Calu3 (cell line): ENCODE measurements at regions of chr16 and their contacts with region 1.

Region 1: DNA sequence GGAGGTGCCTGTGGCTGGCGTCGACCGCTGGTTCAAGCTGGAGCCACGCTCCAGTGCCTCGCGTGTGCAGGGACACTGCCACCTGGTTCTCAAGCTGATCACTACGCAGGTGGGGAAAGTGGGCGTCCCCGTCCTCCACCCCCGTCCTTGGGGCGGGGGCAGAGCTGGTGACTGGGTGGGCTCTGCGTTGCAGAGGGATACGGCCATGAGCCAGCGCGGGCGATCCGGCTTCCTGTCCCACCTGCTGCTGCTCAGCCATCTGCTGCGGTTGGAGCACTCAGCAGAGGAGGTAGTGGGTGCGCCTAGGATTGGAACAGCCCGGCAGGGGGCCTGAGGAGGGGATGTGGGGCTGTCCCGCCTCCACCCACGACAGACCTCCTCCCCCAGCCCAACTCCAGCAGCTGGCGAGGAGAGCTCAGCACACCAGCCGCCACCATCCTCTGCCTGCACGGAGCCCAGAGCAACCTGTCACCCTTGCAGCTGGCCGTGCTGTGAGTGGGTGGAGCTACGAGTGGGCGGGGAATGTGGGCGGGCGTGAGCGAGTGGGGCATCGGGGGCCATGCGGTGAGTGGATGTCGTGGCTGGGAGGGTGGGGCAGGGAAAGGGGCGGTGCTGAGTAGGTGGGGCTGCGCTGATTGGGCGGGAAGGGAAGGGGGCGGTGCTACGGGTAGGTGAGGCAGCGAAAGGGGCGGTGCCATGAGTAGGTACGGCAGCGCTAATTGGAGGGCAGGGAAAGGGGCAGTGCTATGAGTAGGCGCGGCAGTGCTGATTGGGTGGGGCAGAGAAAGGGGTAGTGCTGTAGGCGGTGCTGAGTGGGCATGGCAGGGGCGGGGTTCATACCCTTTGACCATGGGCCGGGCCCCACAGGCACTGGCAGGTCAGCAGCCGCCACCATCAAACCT is 8.9 kb downstream of the TSR3 start:
- DNase-seq: peak; percentile 99
- H3K4me3 Mint-ChIP-seq: peak overlapping the region; percentile 95
- H3K27ac Mint-ChIP-seq: peak overlapping the region; percentile 89
- H3K4me1 Mint-ChIP-seq: peaks cover 13% of the 10 kb centered on the region
- H3K27me3 Mint-ChIP-seq: peaks cover 16% of the 10 kb centered on the region
- CTCF ChIP-seq: no peak

Region 2: DNA sequence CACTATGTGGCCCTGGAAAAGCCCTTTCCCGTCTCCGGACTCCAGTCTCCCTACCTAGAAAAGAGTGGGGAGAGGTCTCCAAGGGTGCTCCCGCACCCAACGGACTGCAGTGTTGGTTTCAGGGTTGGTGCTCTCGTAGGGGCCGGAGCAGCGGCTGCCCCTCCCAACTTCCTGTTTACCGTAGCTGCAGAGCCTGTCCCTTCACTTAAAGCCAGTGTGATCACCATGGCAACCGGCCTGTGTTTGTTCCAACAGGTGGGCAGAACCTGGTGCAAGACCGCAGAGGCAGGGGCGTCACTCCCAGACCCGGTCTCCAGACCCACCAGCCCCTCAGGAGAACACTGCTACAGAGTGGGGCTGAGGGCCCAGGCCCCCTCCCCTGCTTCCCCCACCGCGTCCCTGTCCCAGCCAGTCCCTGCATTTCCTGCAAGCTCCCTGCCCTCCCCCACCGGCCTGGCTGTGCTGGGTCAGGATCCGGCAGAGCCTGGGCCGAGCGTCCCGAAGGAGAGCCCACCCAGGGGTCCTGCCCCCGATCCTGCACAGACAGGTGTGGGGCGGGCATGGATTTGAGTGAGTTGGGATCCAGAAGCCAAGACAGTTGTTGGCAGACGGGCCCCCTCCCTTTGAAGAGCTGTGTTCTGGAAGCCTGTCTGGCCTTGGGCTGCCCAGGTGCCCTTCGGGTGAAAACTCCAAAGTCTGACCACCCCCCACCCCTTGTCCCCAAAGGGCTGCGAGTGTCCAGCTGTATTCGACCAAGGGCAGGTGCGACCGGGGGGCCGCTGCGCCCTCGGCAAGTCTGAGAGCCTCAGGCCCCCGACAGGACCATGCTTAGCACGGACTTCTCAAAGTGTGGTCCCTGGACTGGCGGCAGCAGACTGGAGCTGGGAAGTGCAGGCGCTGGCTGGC is 10.8 kb before region 1 on chr16:
- CTCF ChIA-PET with region 1: interaction called, 14 read pairs
- intact Hi-C with region 1: no loop called
- DNase-seq: peak; percentile 93
- H3K4me3 Mint-ChIP-seq: peak overlapping the region; percentile 63
- H3K27ac Mint-ChIP-seq: peak overlapping the region; percentile 84
- H3K4me1 Mint-ChIP-seq: peaks cover 8% of the 10 kb centered on the region
- H3K27me3 Mint-ChIP-seq: peaks cover 30% of the 10 kb centered on the region
- CTCF ChIP-seq: no peak

Region 3: DNA sequence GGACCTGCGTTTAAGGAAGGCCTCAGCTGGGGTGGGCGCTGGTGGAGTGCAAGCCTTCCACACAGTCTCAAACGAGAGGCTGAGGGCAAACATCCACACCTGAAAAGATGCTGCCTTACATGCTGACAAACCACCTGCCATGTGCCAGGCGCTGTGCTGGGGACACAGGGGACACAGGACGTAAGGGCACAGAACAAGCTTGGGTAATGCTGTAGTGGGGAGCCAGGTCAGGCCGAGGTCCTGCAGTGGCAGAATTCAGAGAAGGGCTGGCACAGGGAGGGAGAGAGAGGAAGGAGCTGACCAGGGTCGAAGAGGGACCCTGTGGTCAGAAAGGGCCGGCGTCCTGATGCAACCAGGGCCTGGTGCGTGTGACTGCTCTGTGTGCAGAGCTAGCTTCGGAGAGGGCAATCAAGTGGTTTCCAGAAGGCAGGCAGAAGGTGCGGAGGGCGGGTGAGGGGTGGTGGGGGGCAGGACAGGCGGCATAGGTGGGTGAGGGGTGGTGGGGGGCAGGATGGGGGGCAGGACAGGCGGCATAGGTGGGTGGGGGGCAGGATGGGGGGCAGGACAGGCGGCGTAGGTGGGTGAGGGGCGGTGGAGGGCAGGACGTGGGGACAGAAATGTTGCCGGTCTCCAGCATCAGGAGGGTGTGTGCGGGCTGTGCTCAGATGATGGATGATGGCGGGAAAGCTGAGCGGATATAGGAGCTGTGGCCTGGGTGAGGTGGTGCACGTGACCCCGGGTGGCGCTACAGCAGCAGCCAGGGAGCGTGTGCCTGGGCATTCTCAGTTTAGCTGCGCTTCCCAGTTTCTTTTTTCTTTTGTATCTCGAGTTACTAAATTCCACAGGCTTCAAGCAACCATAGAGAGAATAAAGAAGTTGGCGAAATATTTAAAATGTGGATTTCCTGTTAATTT is 169.1 kb after region 1 on chr16:
- CTCF ChIA-PET with region 1: interaction called, 10 read pairs
- intact Hi-C with region 1: no loop called
- DNase-seq: no peak
- H3K4me3 Mint-ChIP-seq: no peak overlapping the region
- H3K27ac Mint-ChIP-seq: no peak overlapping the region
- H3K4me1 Mint-ChIP-seq: no peaks in the 10 kb centered on the region
- H3K27me3 Mint-ChIP-seq: no peaks in the 10 kb centered on the region
- CTCF ChIP-seq: no peak